PC-9 (cell line): ENCODE measurements at regions of chr3 and their contacts with region 1.

Region 1: DNA sequence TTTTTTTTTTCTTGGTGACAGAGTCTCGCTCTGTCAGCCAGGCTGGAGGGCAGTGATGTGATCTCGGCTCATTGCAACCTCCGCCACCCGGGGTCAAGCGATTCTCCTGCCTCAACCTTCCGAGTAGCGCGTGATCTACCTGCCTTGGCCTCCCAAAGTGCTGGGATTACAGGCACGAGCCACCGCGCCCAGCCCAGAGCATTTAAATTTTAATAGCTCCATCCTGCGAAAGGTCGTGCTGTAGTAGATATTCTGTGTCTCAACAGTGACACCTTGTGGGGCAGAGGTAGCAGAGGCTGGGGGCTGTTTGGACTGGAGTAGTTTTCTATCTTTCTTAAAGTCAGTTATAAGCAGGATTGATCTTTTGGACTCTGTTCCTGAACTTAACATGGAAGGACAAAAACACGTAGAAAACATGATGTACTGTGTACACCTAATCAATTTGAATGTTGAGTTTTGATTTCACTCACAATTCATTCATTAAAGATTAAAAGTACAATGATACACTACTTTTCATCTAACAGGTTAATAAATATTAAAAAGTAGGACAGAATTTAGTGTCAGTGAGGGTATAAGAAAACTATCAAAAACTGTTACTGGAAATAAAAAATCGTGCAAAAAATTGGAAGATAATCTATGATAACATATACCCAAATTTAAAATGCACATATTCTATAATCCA is 11.0 kb upstream of the PDCD6IP start:
- DNase-seq: peak in 1 of 2 experiments; percentile 31
- H3K4me3 ChIP-seq: no peak overlapping the region
- H3K27ac ChIP-seq: no peak overlapping the region
- H3K4me1 ChIP-seq: peaks cover 4% of the 10 kb centered on the region; the same call in 1 of the 2 replicates
- H3K27me3 ChIP-seq: no peaks in the 10 kb centered on the region
- CTCF ChIP-seq: peak; percentile 69

Region 2: GRCh38 chr3:32947789-32948238 is 839.7 kb before region 1 on chr3:
- CTCF ChIA-PET with region 1: interaction called, 3 read pairs
- POLR2A ChIA-PET with region 1: no interaction called
- intact Hi-C with region 1: loop called (anchors 1 kb)
- DNase-seq: peak; percentile 60 to 78
- H3K4me3 ChIP-seq: no peak overlapping the region
- H3K27ac ChIP-seq: no peak overlapping the region
- H3K4me1 ChIP-seq: no peaks in the 10 kb centered on the region
- H3K27me3 ChIP-seq: no peaks in the 10 kb centered on the region
- CTCF ChIP-seq: peak; percentile 73

Region 3: GRCh38 chr3:33131331-33132018 is 656.0 kb before region 1 on chr3:
- CTCF ChIA-PET with region 1: interaction called, 6 read pairs
- POLR2A ChIA-PET with region 1: no interaction called
- intact Hi-C with region 1: loop called (anchors 2 kb)
- DNase-seq: peak; percentile 43 to 48
- H3K4me3 ChIP-seq: no peak overlapping the region
- H3K27ac ChIP-seq: no peak overlapping the region
- H3K4me1 ChIP-seq: no peaks in the 10 kb centered on the region
- H3K27me3 ChIP-seq: no peaks in the 10 kb centered on the region
- CTCF ChIP-seq: peak; percentile 77

Region 4: GRCh38 chr3:33563474-33563873 is 224.0 kb before region 1 on chr3:
- CTCF ChIA-PET with region 1: no interaction called
- POLR2A ChIA-PET with region 1: interaction called, 10 read pairs
- intact Hi-C with region 1: no loop called
- DNase-seq: no peak
- H3K4me3 ChIP-seq: no peak overlapping the region
- H3K27ac ChIP-seq: no peak overlapping the region
- H3K4me1 ChIP-seq: no peaks in the 10 kb centered on the region
- H3K27me3 ChIP-seq: no peaks in the 10 kb centered on the region
- CTCF ChIP-seq: no peak

Region 5: GRCh38 chr3:33636125-33636850 is 151.2 kb before region 1 on chr3:
- CTCF ChIA-PET with region 1: interaction called, 5 read pairs
- POLR2A ChIA-PET with region 1: no interaction called
- intact Hi-C with region 1: loop called (anchors 2 kb)
- DNase-seq: peak in 1 of 2 experiments; percentile 2
- H3K4me3 ChIP-seq: no peak overlapping the region
- H3K27ac ChIP-seq: no peak overlapping the region
- H3K4me1 ChIP-seq: no peaks in the 10 kb centered on the region
- H3K27me3 ChIP-seq: no peaks in the 10 kb centered on the region
- CTCF ChIP-seq: peak; percentile 65

Region 6: DNA sequence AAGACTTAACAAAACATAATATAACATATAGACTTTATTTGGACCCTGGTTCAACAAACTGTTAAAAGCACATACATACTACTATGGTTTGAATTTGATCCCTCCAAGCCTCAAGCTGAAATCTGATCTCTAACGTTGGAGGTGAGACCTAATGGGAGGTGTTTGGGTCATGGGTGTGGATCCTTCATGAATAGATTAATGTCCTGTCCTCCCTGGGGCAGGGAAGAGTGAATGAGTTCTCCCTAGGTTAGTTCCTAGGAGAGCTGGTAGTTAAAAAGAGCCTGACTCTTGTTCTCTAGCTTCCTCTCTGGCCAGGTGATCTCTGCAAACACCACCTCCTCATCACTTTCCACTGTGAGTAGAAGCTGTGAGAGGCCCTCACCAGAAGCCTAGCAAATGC is 105.8 kb before region 1 on chr3:
- CTCF ChIA-PET with region 1: no interaction called
- POLR2A ChIA-PET with region 1: no interaction called
- intact Hi-C with region 1: no loop called
- DNase-seq: no peak
- H3K4me3 ChIP-seq: no peak overlapping the region
- H3K27ac ChIP-seq: no peak overlapping the region
- H3K4me1 ChIP-seq: no peaks in the 10 kb centered on the region
- H3K27me3 ChIP-seq: no peaks in the 10 kb centered on the region
- CTCF ChIP-seq: no peak